Endothelial cell of umbilical vein (primary cell): ENCODE measurements at regions of chr2 and their contacts with region 1.

Region 1: DNA sequence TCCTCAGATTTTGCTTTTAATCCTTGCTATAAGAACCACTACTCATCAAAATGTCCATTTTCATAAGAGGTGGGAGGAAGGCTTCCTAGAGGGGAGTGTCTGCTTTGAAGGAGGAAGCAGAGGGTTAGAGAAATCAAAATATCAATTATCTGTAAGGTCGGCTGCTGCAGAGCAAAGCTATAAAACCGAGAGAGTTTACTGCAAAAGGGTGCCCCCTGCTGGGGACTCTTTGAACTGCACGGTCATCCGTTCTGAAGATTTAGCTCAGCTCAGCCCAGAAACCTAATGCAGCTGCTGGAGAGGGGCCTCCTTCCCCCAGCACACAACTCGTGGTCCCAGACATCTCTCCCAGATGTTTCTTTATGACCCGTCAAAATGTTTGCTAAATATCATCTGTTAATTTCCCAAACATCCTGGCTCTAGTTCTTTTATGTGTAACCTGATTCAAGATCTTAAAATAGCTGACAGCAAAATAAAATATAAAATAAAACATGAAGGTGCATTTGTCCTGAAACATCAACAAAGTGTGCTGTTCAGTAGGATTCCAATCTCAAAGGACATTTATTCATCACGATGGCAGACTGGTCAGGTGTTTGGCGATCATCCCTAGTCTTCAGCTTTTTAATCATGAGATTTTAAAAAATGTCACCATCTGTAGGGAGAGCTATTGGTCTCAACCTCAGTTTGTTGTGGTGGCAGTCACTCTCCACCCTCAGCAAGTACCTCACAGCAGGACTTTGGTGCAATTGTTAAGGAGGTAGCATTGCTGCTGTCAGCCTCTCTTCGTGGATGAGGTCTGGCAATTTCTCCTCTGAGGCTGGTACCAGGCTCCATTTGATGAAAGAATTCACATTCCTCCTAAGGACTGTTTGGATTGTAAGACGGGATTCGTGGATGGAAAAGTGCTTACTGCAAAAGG is 185.9 kb downstream of the MTX2 start:
- DNase-seq: peak; percentile 87
- H3K4me3 ChIP-seq: no peak overlapping the region
- H3K27ac ChIP-seq: no peak overlapping the region
- H3K4me1 ChIP-seq: peaks cover 3% of the 10 kb centered on the region
- H3K27me3 ChIP-seq: no peaks in the 10 kb centered on the region
- CTCF ChIP-seq: peak; percentile 78 to 82
- POLR2A ChIP-seq: no peak

Region 2: DNA sequence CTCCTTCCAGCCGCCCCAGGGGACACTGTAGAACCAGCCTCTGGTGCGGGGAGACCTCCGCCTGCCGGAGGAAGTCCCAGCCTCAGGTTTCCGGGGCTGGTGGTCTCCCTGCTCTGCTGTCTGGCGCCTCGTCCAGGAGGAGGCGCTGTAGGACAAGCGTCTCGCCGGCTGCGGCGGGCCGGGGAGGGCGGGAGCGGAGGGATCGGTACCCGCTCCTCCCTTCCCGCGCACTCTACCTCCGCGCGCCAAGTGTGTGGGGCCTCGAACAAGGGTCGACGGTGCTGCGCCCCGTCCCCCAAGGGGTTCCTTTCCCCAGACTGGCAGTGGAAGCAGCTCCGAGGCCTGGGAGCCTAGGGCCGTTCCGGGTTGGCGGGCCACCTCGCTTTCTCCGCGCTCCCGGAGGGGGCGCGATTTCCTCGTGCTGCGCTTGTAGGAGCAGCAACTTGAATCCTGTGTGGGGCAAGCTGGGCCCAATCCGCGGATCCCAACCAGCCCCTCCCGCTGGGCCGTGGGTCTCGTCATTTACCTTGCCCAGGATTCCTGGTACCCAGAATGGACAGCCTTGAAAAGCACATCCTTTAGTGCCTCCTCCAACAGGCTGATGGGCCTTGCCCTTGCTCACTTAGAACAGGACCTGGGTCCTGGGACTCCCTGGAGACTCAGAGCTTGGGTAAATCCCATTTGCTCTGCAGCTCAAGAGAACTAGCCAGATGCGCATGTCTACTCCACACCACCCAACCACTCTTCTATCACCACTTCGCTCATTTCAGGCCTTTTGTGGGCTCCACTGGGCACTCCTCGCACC is 314.4 kb before region 1 on chr2:
- CTCF ChIA-PET with region 1: interaction called, 338 read pairs
- POLR2A ChIA-PET with region 1: interaction called, 3 read pairs
- dilution Hi-C with region 1: no loop called
- intact Hi-C with region 1: loop called (anchors 1 kb)
- DNase-seq: peak; percentile 82
- H3K4me3 ChIP-seq: peak overlapping the region; percentile 16 to 51 (median 39)
- H3K27ac ChIP-seq: peak overlapping the region; percentile 56
- H3K4me1 ChIP-seq: peaks cover 30% of the 10 kb centered on the region
- H3K27me3 ChIP-seq: no peaks in the 10 kb centered on the region
- CTCF ChIP-seq: peak; percentile 80 to 83
- POLR2A ChIP-seq: peak; percentile 58

Region 3: DNA sequence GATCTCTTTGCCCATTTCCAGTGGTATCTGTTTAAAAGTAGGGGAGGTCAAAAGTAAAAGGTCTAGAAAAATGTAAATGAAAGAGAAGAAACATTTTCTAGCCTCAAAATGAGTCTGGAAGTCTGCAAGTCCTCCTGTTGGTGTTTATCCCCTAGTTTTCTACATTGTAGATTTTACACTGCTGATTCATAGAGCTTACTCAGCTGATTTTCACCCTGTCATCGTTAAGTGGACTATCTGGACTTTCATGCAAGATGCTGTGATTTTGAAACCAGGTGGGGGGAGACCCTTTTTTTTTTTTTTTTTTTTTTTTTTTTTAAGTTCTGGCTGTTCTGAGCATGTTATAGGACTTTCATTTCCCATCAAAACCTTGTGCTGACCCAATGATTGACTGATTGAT is 287.8 kb before region 1 on chr2:
- CTCF ChIA-PET with region 1: interaction called, 20 read pairs
- POLR2A ChIA-PET with region 1: no interaction called
- dilution Hi-C with region 1: no loop called
- intact Hi-C with region 1: no loop called
- DNase-seq: no peak
- H3K4me3 ChIP-seq: no peak overlapping the region
- H3K27ac ChIP-seq: no peak overlapping the region
- H3K4me1 ChIP-seq: peaks cover 3% of the 10 kb centered on the region
- H3K27me3 ChIP-seq: peaks cover 5 to 15% of the 10 kb centered on the region in 2 experiments
- CTCF ChIP-seq: no peak
- POLR2A ChIP-seq: no peak

Region 4: GRCh38 chr2:176251928-176252327 is 203.2 kb before region 1 on chr2:
- CTCF ChIA-PET with region 1: interaction called, 12 read pairs
- POLR2A ChIA-PET with region 1: no interaction called
- dilution Hi-C with region 1: no loop called
- intact Hi-C with region 1: no loop called
- DNase-seq: no peak
- H3K4me3 ChIP-seq: no peak overlapping the region
- H3K27ac ChIP-seq: no peak overlapping the region
- H3K4me1 ChIP-seq: no peaks in the 10 kb centered on the region
- H3K27me3 ChIP-seq: no peaks in the 10 kb centered on the region
- CTCF ChIP-seq: no peak
- POLR2A ChIP-seq: no peak

Region 5: GRCh38 chr2:176297067-176297466 is 158.1 kb before region 1 on chr2:
- CTCF ChIA-PET with region 1: interaction called, 16 read pairs
- POLR2A ChIA-PET with region 1: no interaction called
- dilution Hi-C with region 1: no loop called
- intact Hi-C with region 1: no loop called
- DNase-seq: no peak
- H3K4me3 ChIP-seq: no peak overlapping the region
- H3K27ac ChIP-seq: no peak overlapping the region
- H3K4me1 ChIP-seq: no peaks in the 10 kb centered on the region
- H3K27me3 ChIP-seq: no peaks in the 10 kb centered on the region
- CTCF ChIP-seq: no peak
- POLR2A ChIP-seq: no peak

Region 6: GRCh38 chr2:176518823-176519222 is 63.7 kb after region 1 on chr2:
- CTCF ChIA-PET with region 1: interaction called, 21 read pairs
- POLR2A ChIA-PET with region 1: no interaction called
- dilution Hi-C with region 1: no loop called
- intact Hi-C with region 1: loop called (anchors 1 kb)
- DNase-seq: peak; percentile 98
- H3K4me3 ChIP-seq: no peak overlapping the region
- H3K27ac ChIP-seq: peak overlapping the region; percentile 64
- H3K4me1 ChIP-seq: peaks cover 36% of the 10 kb centered on the region
- H3K27me3 ChIP-seq: no peaks in the 10 kb centered on the region
- CTCF ChIP-seq: peak in 1 of 2 donors; percentile 12
- POLR2A ChIP-seq: peak; percentile 31

Region 7: GRCh38 chr2:176653479-176654443 is 198.6 kb after region 1 on chr2:
- CTCF ChIA-PET with region 1: interaction called, 34 read pairs
- POLR2A ChIA-PET with region 1: interaction called, 3 read pairs
- dilution Hi-C with region 1: no loop called
- intact Hi-C with region 1: loop called (anchors 1 kb)
- DNase-seq: peak; percentile 86
- H3K4me3 ChIP-seq: no peak overlapping the region
- H3K27ac ChIP-seq: no peak overlapping the region
- H3K4me1 ChIP-seq: peaks cover 7% of the 10 kb centered on the region
- H3K27me3 ChIP-seq: peaks cover 0 to 8% of the 10 kb centered on the region in 2 experiments
- CTCF ChIP-seq: peak; percentile 69 to 76
- POLR2A ChIP-seq: no peak

Region 8: DNA sequence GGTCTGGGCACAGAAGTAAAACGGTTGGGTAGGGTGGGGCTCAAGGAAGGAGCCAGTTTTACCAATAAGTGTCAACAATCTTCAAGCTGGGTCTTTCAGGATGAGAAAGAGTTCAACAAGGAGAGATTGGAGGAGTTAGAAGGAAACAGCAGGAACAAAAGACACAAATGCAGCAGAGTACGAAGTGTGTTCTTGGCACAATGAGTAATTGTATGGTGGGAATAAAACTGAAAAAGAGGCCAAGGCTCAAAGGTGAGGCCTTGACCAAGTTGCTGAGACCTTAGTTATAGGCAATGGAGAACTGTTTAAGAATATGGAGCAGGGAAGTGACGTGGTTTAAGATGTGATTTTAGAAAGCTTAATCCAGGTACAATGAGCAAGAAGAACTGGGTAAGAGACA is 1387.1 kb after region 1 on chr2:
- CTCF ChIA-PET with region 1: no interaction called
- POLR2A ChIA-PET with region 1: no interaction called
- dilution Hi-C with region 1: no loop called
- intact Hi-C with region 1: no loop called
- DNase-seq: no peak
- H3K4me3 ChIP-seq: no peak overlapping the region
- H3K27ac ChIP-seq: no peak overlapping the region
- H3K4me1 ChIP-seq: no peaks in the 10 kb centered on the region
- H3K27me3 ChIP-seq: no peaks in the 10 kb centered on the region
- CTCF ChIP-seq: no peak
- POLR2A ChIP-seq: no peak